ENCODE measurements at regions of chr2 and their contacts with region 1.

Region 1: GRCh38 chr2:119702918-119703401 is 24.0 kb downstream of the TMEM177 start:
- DNase-seq: peak in 1 of 2 donors; percentile 79
- H3K4me3 ChIP-seq: no peak overlapping the region
- H3K27ac ChIP-seq: no peak overlapping the region
- H3K4me1 ChIP-seq: no peaks in the 10 kb centered on the region
- H3K27me3 ChIP-seq: no peaks in the 10 kb centered on the region
- CTCF ChIP-seq: peak; percentile 74 to 86 (median 86)

Region 2: DNA sequence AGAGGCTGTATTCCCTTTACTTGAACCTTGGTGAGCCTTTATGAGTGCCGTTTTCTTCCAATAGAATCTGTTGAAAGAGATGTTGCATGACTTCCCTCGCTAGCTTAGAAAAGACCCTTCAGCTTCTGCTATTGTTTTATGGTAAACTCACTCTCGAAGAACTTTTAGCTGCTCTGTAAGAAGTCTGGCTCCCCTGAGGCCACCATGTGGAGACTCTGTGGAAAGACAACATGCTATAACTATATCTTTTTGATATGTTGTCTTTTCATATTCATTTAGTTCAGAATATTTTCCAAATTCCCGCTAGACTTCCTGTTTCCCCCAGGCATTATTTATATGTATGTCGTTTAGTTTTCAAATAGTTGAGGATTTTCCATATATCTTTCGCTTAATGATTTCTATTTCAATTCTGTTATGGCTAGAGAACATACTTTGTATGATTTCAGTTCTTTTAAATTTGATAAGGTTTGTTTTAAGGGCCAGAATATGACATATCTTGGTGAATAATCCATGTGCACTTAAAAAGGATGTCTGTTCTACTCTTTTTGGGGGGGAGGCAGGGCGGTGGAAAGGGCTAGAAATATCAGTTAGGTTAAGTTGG is 120.9 kb after region 1 on chr2:
- intact Hi-C with region 1: loop called (anchors 2 kb)
- DNase-seq: no peak
- H3K4me3 ChIP-seq: no peak overlapping the region
- H3K27ac ChIP-seq: no peak overlapping the region
- H3K4me1 ChIP-seq: no peaks in the 10 kb centered on the region
- H3K27me3 ChIP-seq: no peaks in the 10 kb centered on the region
- CTCF ChIP-seq: peak; percentile 28 to 66 (median 38)

Region 3: DNA sequence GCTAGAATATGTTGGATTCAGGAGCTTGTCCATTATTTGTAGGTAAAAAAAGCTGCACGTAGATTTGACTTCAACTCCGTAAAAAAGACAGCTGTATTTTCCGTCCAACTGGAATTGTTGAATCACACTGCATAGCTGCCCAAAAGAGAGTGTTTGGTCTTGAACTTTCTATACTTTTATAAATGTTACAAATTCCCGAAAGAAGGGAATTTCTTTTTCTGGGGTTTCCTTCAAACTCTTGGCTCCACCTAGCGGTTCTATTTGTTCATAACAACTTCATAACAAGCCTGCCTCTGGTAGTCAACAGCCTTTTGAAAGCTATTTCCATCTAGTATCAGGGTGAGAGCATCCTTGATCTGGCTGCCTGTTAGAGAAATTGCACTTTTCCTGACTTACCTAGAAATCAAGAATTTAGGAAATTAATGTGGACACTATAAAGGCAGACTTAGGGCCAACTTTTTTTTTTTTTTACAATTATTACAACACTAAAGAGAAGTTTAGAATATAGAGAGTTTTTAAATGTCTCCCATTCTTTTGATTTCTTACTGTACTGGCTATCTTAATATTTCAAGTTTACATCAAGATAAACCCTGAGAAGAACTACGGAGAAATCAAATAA is 472.1 kb after region 1 on chr2:
- intact Hi-C with region 1: loop called (anchors 2 kb)
- DNase-seq: no peak
- H3K4me3 ChIP-seq: peak overlapping the region; percentile 32 to 35
- H3K27ac ChIP-seq: peak overlapping the region; percentile 55 to 70
- H3K4me1 ChIP-seq: peaks cover 0 to 4% of the 10 kb centered on the region in 2 donors
- H3K27me3 ChIP-seq: no peaks in the 10 kb centered on the region
- CTCF ChIP-seq: peak; percentile 48 to 73 (median 70)

Region 4: DNA sequence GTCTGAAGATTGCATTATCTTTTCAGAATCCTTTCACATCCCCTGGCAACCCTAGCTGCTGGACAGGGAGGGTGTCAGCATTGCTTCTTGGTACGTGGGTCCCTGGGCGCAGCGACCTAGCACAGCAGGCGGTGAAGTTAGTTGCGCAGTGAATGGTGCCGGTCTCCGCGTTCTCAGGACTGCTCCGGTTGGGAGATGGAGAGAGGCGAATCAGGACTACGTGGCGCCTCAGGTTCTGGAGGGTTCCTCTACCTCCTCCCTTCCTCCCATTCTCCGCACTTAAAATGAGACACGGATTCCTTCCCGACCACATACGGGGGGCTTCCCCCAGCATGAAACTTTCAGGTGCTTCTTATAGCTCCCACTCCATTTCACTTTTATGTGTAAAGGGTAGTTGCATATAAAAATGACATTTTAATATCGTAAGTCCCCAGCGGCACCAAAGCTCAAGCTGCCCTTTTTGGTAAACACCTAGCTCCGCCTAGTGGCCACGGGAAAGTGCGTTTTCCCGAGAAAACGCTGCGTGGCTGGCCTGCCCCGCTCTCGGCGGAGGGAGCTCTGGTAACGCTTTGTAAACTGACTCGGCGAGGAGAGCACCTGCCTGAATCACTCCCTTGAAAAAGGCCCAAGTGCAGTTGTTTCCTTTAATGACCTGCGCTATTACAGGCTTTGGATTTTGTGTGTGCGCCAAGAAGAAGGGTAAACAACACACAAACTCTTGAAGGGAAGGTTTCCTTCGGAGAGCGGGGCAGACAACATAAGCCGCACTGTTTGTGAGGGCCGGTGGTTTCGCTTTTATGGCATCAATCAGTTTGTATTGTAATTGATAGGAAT is 610.1 kb after region 1 on chr2:
- intact Hi-C with region 1: loop called (anchors 5 kb)
- DNase-seq: peak in 1 of 2 donors; percentile 87
- H3K4me3 ChIP-seq: peak overlapping the region; percentile 54
- H3K27ac ChIP-seq: peak overlapping the region in 1 of 2 donors; percentile 24
- H3K4me1 ChIP-seq: no peaks in the 10 kb centered on the region
- H3K27me3 ChIP-seq: no peaks in the 10 kb centered on the region
- CTCF ChIP-seq: peak; percentile 76 to 89 (median 79)

Measured in ascending aorta (tissue), 2 donors.